K562 (cell line): ENCODE measurements at regions of chr3 and their contacts with region 1.

Region 1: GRCh38 chr3:119676771-119677640 is at the start of gene COX17:
- DNase-seq: peak; percentile 93 to 94 (median 94)
- ATAC-seq: peak; percentile 91
- H3K4me3 ChIP-seq: peak within 1 kb of the TSS; percentile 58
- H3K27ac ChIP-seq: peak within 1 kb of the TSS; percentile 94
- H3K4me1 ChIP-seq: peaks cover 0 to 11% of the 10 kb centered on the region in 2 experiments; a peak in 3 of 5 replicates
- H3K27me3 ChIP-seq: no peaks in the 10 kb centered on the region
- CTCF ChIP-seq: 0 out of 6 replicates have a peak, but pooled peaks of 1 of the 3 experiments have one; percentile 5
- EP300 ChIP-seq: no peak
- POLR2A ChIP-seq: peak; percentile 89
- RAD21 ChIP-seq: peak; percentile 7 to 28; a peak in 3 of 4 replicates
- polyA plus RNA-seq, gene COX17: 147 to 167 TPM

Region 2: DNA sequence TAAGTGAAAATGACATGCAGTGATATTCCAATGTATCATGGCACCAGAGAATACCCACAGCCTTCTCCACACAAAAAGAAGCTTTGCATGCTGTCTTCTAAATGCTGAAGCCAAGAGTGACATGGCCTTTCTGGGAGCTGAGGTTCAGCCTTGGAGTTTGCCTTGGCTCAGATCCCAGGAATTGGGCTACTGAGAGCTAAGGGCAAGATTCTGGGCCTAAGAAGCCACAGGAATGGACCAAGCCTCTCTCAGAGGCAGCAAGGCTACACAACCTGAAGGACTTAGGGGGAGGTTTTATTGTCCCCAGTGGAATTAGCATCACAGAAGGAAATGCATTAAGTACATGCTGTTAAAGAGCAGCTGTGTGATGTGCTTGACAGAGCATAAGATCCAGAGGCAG is 1888.9 kb before region 1 on chr3:
- CTCF ChIA-PET with region 1: no interaction called
- POLR2A ChIA-PET with region 1: no interaction called
- in situ Hi-C with region 1: no loop called
- intact Hi-C with region 1: no loop called
- DNase-seq: no peak
- ATAC-seq: no peak
- H3K4me3 ChIP-seq: no peak overlapping the region
- H3K27ac ChIP-seq: no peak overlapping the region
- H3K4me1 ChIP-seq: no peaks in the 10 kb centered on the region
- H3K27me3 ChIP-seq: no peaks in the 10 kb centered on the region
- CTCF ChIP-seq: no peak
- EP300 ChIP-seq: no peak
- POLR2A ChIP-seq: no peak
- RAD21 ChIP-seq: no peak

Region 3: DNA sequence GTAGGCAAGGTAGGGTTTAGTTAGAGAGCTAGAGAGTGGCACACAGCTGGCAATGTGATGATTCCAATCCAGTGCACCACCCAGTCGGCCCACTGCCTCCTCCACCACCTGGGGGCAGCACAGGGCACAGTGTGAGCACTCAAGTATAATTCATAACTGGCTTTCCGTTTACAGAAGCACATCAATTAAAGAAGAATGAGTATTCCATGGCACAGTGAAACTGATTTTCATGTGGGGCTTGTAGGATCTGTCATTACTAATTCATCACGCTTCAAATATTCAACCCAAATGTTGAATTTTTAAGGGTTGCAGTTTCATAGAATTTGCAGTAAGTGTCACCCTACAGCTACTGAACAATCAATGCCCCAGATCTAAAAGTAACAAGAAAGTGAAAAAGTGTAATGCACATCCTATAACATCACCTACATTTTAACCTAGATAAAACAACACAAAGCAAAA is 792.2 kb before region 1 on chr3:
- CTCF ChIA-PET with region 1: interaction called, 10 read pairs
- POLR2A ChIA-PET with region 1: no interaction called
- in situ Hi-C with region 1: loop called (anchors 25 kb)
- intact Hi-C with region 1: loop called (anchors 10 kb)
- DNase-seq: peak; percentile 19 to 58 (median 28)
- ATAC-seq: peak; percentile 87
- H3K4me3 ChIP-seq: no peak overlapping the region
- H3K27ac ChIP-seq: no peak overlapping the region
- H3K4me1 ChIP-seq: no peaks in the 10 kb centered on the region
- H3K27me3 ChIP-seq: no peaks in the 10 kb centered on the region
- CTCF ChIP-seq: peak; percentile 70 to 87 (median 86)
- EP300 ChIP-seq: no peak
- POLR2A ChIP-seq: no peak
- RAD21 ChIP-seq: peak; percentile 91 to 96

Region 4: DNA sequence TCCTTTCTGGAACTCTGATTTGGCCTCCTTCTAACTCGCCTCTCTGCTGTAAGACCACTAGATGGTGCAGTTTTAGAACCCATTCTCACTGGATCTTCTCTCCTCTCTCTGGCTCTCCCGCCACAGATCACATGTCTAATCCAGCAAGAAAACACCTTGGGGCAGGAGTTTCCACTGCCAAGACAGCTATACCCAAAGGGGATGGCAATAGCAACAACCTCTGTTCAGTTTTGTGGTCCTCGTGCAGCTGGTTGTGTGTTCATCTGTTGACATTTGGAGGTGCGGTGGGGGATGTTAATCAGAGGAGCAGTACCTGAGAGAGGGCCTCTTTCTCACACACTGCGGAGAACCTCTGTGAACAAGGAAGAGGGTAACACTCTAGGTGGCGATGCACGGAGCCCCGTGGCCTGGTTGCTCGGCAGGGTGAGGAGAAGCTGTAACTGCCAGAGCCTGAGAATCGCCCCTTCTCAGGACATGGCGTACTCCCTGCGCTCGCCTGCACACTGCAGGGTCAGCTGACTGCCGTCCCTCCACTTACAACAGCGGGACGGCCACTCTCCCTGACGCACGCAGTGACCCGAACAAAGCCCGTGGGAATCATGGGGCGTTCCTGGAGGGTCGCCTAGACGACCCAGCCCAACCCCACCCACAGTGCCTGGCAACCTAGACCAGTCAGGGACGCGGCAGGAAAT is 531.4 kb before region 1 on chr3 and contains the start of gene TEX55:
- CTCF ChIA-PET with region 1: no interaction called
- POLR2A ChIA-PET with region 1: no interaction called
- in situ Hi-C with region 1: loop called (anchors 25 kb)
- intact Hi-C with region 1: no loop called
- DNase-seq: peak in 3 of 4 experiments; percentile 10 to 44 (median 36)
- ATAC-seq: peak; percentile 89
- H3K4me3 ChIP-seq: no peak within 1 kb of the TSS
- H3K27ac ChIP-seq: no peak within 1 kb of the TSS
- H3K4me1 ChIP-seq: peaks cover 0 to 6% of the 10 kb centered on the region in 2 experiments; a peak in 2 of 5 replicates
- H3K27me3 ChIP-seq: no peaks in the 10 kb centered on the region
- CTCF ChIP-seq: peak; percentile 51 to 66 (median 60)
- EP300 ChIP-seq: no peak
- POLR2A ChIP-seq: no peak
- RAD21 ChIP-seq: peak; percentile 48 to 77
- polyA plus RNA-seq, gene TEX55: not detected

Region 5: DNA sequence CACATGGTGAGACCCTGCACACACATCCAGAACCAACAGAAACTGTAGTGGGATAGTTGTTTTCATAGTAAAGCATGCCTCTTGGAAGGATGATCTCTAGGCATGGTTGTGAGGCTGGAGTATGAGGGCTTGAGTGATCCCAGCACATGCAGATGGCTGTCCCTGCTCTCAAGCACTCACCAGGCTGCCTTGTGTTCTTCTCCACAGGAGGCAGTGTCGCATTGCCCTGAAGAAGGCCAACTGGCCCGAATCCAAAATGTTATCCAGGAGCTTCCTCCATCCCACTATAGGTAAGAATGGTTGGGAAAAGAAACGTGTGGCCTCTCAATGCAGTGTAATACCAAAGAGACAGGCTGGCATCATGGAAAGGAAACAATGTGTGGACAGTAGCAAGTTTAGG is 296.3 kb before region 1 on chr3:
- CTCF ChIA-PET with region 1: no interaction called
- POLR2A ChIA-PET with region 1: no interaction called
- in situ Hi-C with region 1: no loop called
- intact Hi-C with region 1: loop called (anchors 5 kb)
- DNase-seq: peak in 1 of 4 experiments; percentile 29
- ATAC-seq: peak; percentile 69
- H3K4me3 ChIP-seq: no peak overlapping the region
- H3K27ac ChIP-seq: no peak overlapping the region
- H3K4me1 ChIP-seq: no peaks in the 10 kb centered on the region
- H3K27me3 ChIP-seq: peaks cover 0 to 9% of the 10 kb centered on the region in 2 experiments; a peak in 2 of 5 replicates
- CTCF ChIP-seq: peak; percentile 9 to 27 (median 18); a peak in 2 of 6 replicates
- EP300 ChIP-seq: no peak
- POLR2A ChIP-seq: no peak
- RAD21 ChIP-seq: peak in 1 of 2 experiments; percentile 39; a peak in 2 of 4 replicates

Region 6: DNA sequence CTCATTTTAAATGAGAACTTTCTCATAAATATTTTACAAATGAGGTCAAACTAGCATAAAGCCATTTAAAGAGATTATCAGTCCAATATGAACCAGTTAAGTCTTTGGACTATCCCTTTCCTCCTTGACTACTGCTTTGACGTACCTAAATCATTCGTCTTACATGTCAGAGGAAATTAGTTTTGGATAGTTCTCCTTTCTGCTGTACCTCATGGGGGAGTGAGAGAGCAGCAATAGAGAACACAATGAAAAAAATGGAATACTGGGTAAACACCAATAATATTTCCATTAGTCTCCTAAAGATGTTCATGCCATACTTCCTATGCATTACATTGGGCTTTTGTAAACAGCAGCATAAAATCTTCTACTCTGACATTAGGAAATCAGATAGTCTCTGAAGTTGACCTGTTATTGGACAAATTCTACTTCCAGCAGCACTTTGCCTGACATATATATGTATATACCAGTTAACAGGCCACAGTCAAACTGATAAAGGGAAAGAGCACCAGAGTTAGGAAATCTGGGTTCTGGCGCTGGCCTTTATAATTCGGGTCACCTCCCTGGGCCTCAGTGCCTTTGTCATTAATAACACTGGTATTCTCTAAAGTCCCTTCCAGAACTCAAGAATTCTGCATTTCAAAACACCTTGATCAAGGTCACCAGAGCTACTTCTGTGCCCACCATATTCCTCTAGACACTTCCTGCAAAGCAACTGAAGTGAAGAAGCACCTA is 151.9 kb before region 1 on chr3:
- CTCF ChIA-PET with region 1: no interaction called
- POLR2A ChIA-PET with region 1: no interaction called
- in situ Hi-C with region 1: no loop called
- intact Hi-C with region 1: loop called (anchors 1 kb)
- DNase-seq: peak in 1 of 4 experiments; percentile 12
- ATAC-seq: peak; percentile 74
- H3K4me3 ChIP-seq: no peak overlapping the region
- H3K27ac ChIP-seq: no peak overlapping the region
- H3K4me1 ChIP-seq: no peaks in the 10 kb centered on the region; a peak in 1 of 5 replicates
- H3K27me3 ChIP-seq: no peaks in the 10 kb centered on the region
- CTCF ChIP-seq: peak in 2 of 3 experiments; percentile 15 to 63; a peak in 3 of 6 replicates
- EP300 ChIP-seq: no peak
- POLR2A ChIP-seq: no peak
- RAD21 ChIP-seq: peak; percentile 58 to 70

Region 7: GRCh38 chr3:119600732-119601131 is 76.3 kb before region 1 on chr3:
- CTCF ChIA-PET with region 1: interaction called, 4 read pairs
- POLR2A ChIA-PET with region 1: no interaction called
- in situ Hi-C with region 1: no loop called
- intact Hi-C with region 1: loop called (anchors 1 kb)
- DNase-seq: peak; percentile 9 to 28 (median 16)
- ATAC-seq: peak; percentile 93
- H3K4me3 ChIP-seq: no peak overlapping the region
- H3K27ac ChIP-seq: no peak overlapping the region
- H3K4me1 ChIP-seq: peaks cover 4 to 5% of the 10 kb centered on the region in 2 experiments
- H3K27me3 ChIP-seq: no peaks in the 10 kb centered on the region
- CTCF ChIP-seq: peak; percentile 47 to 60 (median 57)
- EP300 ChIP-seq: no peak
- POLR2A ChIP-seq: no peak
- RAD21 ChIP-seq: peak; percentile 52 to 68

Region 8: DNA sequence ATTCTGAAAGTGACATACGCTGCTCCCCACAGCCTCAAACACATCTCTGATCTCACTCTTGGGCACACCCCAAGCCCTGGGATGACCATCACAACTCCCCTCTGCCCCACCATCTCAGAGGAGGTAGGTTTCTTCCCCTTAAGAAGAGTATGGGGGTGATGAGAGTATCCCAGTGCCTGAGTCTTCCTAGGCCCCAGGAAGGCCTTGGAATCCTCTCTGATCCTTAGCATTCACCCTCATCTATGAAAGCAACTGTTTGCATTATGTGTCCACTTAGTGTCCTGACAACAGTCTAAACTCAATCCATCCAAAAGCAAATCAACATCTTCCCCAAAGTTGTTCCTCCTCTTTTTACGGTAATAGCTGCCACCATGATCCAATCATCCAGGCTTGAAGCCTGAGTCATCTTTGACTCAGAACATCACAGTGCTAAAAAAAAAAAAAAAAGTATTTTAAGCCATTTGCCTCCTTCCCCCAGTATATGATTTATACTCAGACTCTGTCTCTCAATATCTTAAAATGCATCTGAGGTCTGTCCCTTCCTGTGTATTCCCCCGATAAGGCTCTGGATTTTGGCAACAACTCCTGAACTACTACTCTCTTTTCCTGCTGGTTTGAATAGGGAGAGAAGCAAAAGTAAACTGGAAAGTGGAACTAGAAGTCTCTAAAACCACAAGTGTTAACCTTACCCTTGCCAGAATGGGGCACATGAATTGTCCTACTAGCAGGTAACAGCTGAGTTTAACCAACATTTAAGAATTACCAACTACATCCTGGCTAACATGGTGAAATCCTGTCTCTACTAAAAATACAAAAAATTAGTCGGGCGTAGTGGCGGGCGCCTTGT is 39.1 kb before region 1 on chr3:
- CTCF ChIA-PET with region 1: no interaction called
- POLR2A ChIA-PET with region 1: no interaction called
- in situ Hi-C with region 1: no loop called
- intact Hi-C with region 1: loop called (anchors 5 kb)
- DNase-seq: peak in 2 of 4 experiments; percentile 16 to 50
- ATAC-seq: peak; percentile 29; the same call in 2 of the 3 replicates
- H3K4me3 ChIP-seq: no peak overlapping the region
- H3K27ac ChIP-seq: peak overlapping the region; percentile 83; the same call in 2 of the 3 replicates
- H3K4me1 ChIP-seq: peaks cover 8 to 42% of the 10 kb centered on the region in 2 experiments
- H3K27me3 ChIP-seq: no peaks in the 10 kb centered on the region
- CTCF ChIP-seq: no peak
- EP300 ChIP-seq: peak; percentile 71
- POLR2A ChIP-seq: no peak
- RAD21 ChIP-seq: no peak